ENCODE measurements at regions of chr20 and their contacts with region 1.

Region 1: GRCh38 chr20:41339507-41340326 is 904 bp upstream of the LPIN3 start:
- DNase-seq: peak; percentile 87
- H3K4me3 Mint-ChIP-seq: peak overlapping the region; percentile 73
- H3K27ac Mint-ChIP-seq: no peak overlapping the region
- H3K4me1 Mint-ChIP-seq: peaks cover 11% of the 10 kb centered on the region
- H3K27me3 Mint-ChIP-seq: peaks cover 2% of the 10 kb centered on the region

Region 2: DNA sequence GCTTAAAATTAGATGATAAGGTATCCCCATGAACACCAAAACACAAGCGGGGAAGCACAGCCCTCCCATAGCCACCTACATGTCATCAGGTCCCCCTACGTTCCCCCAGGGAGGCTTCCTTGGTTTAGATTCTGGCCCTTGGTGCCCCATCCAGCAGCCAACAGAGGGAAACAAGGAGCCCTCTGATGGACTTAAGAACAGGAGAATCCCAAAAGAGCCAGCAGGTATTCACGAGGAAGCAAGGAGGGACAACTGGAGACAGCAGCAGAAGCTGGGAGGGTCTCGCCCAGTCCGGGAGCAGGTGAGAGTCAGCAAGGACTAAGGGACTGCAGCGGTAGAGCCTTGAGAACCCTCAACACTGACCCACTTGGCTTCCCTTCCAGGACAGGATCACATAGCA is 369.5 kb before region 1 on chr20:
- CTCF ChIA-PET with region 1: interaction called, 12 read pairs
- intact Hi-C with region 1: loop called (anchors 1 kb)
- DNase-seq: no peak
- H3K4me3 Mint-ChIP-seq: no peak overlapping the region
- H3K27ac Mint-ChIP-seq: no peak overlapping the region
- H3K4me1 Mint-ChIP-seq: peaks cover 6% of the 10 kb centered on the region
- H3K27me3 Mint-ChIP-seq: peaks cover 5% of the 10 kb centered on the region

Region 3: GRCh38 chr20:41232973-41233926 is 106.5 kb before region 1 on chr20:
- CTCF ChIA-PET with region 1: interaction called, 6 read pairs
- intact Hi-C with region 1: loop called (anchors 1 kb)
- DNase-seq: no peak
- H3K4me3 Mint-ChIP-seq: no peak overlapping the region
- H3K27ac Mint-ChIP-seq: no peak overlapping the region
- H3K4me1 Mint-ChIP-seq: peaks cover 24% of the 10 kb centered on the region
- H3K27me3 Mint-ChIP-seq: no peaks in the 10 kb centered on the region

Region 4: GRCh38 chr20:41317536-41318270 is 22.0 kb before region 1 on chr20 and contains the start of gene ZHX3:
- CTCF ChIA-PET with region 1: interaction called, 7 read pairs
- intact Hi-C with region 1: loop called (anchors 1 kb)
- DNase-seq: peak; percentile 94
- H3K4me3 Mint-ChIP-seq: peak within 1 kb of the TSS; percentile 85
- H3K27ac Mint-ChIP-seq: peak within 1 kb of the TSS; percentile 65
- H3K4me1 Mint-ChIP-seq: peaks cover 29% of the 10 kb centered on the region
- H3K27me3 Mint-ChIP-seq: no peaks in the 10 kb centered on the region
- total RNA-seq, gene ZHX3: 9.4 to 9.9 TPM

Region 5: GRCh38 chr20:41418739-41419293 is 79.1 kb after region 1 on chr20:
- CTCF ChIA-PET with region 1: no interaction called
- intact Hi-C with region 1: no loop called
- DNase-seq: no peak
- H3K4me3 Mint-ChIP-seq: no peak overlapping the region
- H3K27ac Mint-ChIP-seq: no peak overlapping the region
- H3K4me1 Mint-ChIP-seq: peaks cover 2% of the 10 kb centered on the region
- H3K27me3 Mint-ChIP-seq: no peaks in the 10 kb centered on the region

Region 6: DNA sequence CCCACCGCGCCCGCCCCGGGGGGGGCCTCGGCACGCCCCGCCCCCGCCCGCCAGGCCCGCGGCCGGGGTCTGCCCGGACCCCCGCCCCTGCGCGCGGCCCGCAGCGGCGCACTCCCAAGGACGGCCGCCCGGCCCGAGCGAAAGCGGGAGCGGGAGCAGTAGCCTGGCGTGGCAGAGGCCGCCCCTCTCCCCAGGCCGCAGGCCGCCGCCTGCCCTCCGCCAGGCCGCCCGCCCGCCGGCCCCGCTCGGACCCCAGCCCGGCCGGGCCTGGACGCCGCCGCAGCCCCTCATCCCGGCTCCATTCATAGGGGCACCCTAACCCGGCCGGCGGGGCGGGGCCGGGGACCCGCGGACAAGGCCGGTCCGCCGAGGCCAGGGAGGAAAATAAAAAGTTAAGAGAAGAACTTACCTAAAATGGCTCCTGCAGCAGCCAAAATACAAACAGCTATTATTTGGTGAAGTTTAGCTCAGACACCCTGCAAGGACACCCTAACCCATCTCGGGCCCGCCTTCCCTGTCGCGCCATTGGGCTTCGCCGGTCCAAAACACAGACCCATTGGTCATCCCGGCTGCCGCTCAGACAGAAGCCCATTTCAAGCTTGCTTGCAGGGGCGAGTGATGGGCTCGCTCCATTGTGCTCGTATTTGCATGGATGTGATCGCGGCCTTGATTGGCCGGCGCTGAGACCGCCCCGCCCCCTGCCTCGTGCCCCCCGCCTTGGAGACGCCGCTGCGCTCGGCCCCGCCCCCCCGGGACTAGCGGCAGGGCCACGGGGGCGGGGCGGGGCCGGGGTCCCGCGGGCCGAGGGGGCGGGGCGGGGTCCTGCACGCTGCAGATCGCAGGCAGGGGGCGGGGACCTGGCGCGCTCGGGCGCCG is 278.5 kb after region 1 on chr20 and contains the start of gene CHD6:
- CTCF ChIA-PET with region 1: no interaction called
- intact Hi-C with region 1: loop called (anchors 10 kb)
- DNase-seq: peak; percentile 100
- H3K4me3 Mint-ChIP-seq: peak within 1 kb of the TSS; percentile 85
- H3K27ac Mint-ChIP-seq: peak within 1 kb of the TSS; percentile 68
- H3K4me1 Mint-ChIP-seq: peaks cover 39% of the 10 kb centered on the region
- H3K27me3 Mint-ChIP-seq: no peaks in the 10 kb centered on the region
- total RNA-seq, gene CHD6: 30.1 to 31.8 TPM